Mammary epithelial cell (primary cell): ENCODE measurements at regions of chr5 and their contacts with region 1.

Region 1: DNA sequence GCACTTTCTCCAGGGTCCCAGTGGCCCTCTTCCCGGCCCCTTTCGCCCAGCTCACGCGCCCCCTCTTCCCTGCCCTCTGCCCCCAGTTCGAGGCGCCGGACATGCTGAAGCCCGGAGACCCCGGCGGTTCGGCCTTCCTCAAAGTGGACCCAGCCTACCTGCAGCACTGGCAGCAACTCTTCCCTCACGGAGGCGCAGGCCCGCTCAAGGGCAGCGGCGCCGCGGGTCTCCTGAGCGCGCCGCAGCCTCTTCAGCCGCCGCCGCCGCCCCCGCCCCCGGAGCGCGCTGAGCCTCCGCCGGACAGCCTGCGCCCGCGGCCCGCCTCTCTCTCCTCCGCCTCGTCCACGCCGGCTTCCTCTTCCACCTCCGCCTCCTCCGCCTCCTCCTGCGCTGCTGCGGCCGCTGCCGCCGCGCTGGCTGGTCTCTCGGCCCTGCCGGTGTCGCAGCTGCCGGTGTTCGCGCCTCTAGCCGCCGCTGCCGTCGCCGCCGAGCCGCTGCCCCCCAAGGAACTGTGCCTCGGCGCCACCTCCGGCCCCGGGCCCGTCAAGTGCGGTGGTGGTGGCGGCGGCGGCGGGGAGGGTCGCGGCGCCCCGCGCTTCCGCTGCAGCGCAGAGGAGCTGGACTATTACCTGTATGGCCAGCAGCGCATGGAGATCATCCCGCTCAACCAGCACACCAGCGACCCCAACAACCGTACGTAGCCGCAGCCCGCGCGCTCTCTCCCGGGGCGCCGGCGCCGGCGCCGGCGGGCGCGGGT is 1.1 kb downstream of the PRDM6 start:
- DNase-seq: no peak
- H3K4me3 ChIP-seq: peak overlapping the region in 2 of 3 experiments; percentile 25 to 40
- H3K27ac ChIP-seq: no peak overlapping the region
- H3K4me1 ChIP-seq: peaks cover 22% of the 10 kb centered on the region
- H3K27me3 ChIP-seq: peaks cover 83% of the 10 kb centered on the region
- CTCF ChIP-seq: no peak

Region 2: GRCh38 chr5:122385808-122386207 is 704.3 kb before region 1 on chr5:
- CTCF ChIA-PET with region 1: no interaction called
- dilution Hi-C with region 1: no loop called
- in situ Hi-C with region 1: no loop called
- intact Hi-C with region 1: no loop called
- DNase-seq: no peak
- H3K4me3 ChIP-seq: no peak overlapping the region
- H3K27ac ChIP-seq: no peak overlapping the region
- H3K4me1 ChIP-seq: no peaks in the 10 kb centered on the region
- H3K27me3 ChIP-seq: peaks cover 2% of the 10 kb centered on the region
- CTCF ChIP-seq: no peak

Region 3: DNA sequence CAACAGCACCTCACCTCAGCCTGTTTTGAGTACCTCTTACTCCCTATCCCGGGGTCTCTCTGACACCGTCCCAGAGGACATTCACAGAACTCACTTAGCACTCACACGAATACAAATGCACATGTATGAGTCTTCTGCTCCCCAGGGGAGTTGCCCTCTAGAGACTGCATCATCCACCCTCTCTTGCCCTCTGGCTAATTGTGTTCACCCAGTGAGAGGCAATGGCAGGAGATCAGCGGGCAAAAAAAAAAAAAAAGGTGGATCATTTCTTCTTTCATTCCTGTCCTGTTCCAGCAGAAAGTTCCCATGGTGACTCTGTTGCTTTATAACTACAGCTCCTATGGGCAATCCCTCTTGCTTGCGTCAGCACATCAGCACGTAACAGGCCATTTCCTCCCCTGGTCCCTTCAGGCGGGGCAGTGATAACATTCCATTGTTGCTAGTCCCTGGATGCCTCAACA is 338.8 kb before region 1 on chr5:
- CTCF ChIA-PET with region 1: no interaction called
- dilution Hi-C with region 1: no loop called
- in situ Hi-C with region 1: no loop called
- intact Hi-C with region 1: no loop called
- DNase-seq: peak; percentile 96
- H3K4me3 ChIP-seq: no peak overlapping the region
- H3K27ac ChIP-seq: peak overlapping the region; percentile 95
- H3K4me1 ChIP-seq: peaks cover 31% of the 10 kb centered on the region
- H3K27me3 ChIP-seq: no peaks in the 10 kb centered on the region
- CTCF ChIP-seq: no peak

Region 4: GRCh38 chr5:123249446-123249845 is 159.4 kb after region 1 on chr5:
- CTCF ChIA-PET with region 1: no interaction called
- dilution Hi-C with region 1: no loop called
- in situ Hi-C with region 1: no loop called
- intact Hi-C with region 1: no loop called
- DNase-seq: no peak
- H3K4me3 ChIP-seq: no peak overlapping the region
- H3K27ac ChIP-seq: no peak overlapping the region
- H3K4me1 ChIP-seq: no peaks in the 10 kb centered on the region
- H3K27me3 ChIP-seq: no peaks in the 10 kb centered on the region
- CTCF ChIP-seq: no peak

Region 5: GRCh38 chr5:123535648-123536047 is 445.6 kb after region 1 on chr5:
- CTCF ChIA-PET with region 1: interaction called, 19 read pairs
- dilution Hi-C with region 1: no loop called
- in situ Hi-C with region 1: no loop called
- intact Hi-C with region 1: no loop called
- DNase-seq: no peak
- H3K4me3 ChIP-seq: no peak overlapping the region
- H3K27ac ChIP-seq: no peak overlapping the region
- H3K4me1 ChIP-seq: no peaks in the 10 kb centered on the region
- H3K27me3 ChIP-seq: no peaks in the 10 kb centered on the region
- CTCF ChIP-seq: no peak